Naive thymus-derived CD8-positive, alpha-beta T cell (primary cell): ENCODE measurements at regions of chr1 and their contacts with region 1.

Region 1: GRCh38 chr1:234610348-234611152 is 572 bp upstream of the IRF2BP2 start:
- DNase-seq: peak; percentile 81 to 96 (median 91)
- ATAC-seq: peak; percentile 37 to 51
- H3K4me3 Mint-ChIP-seq: peak overlapping the region; percentile 86 to 97 (median 94)
- H3K27ac Mint-ChIP-seq: peak overlapping the region; percentile 95 to 100 (median 100)
- H3K4me1 Mint-ChIP-seq: peaks cover 41 to 63% (median 57%) of the 10 kb centered on the region in 4 donors
- H3K27me3 Mint-ChIP-seq: peaks cover 0 to 1% (median 0%) of the 10 kb centered on the region in 5 donors

Region 2: DNA sequence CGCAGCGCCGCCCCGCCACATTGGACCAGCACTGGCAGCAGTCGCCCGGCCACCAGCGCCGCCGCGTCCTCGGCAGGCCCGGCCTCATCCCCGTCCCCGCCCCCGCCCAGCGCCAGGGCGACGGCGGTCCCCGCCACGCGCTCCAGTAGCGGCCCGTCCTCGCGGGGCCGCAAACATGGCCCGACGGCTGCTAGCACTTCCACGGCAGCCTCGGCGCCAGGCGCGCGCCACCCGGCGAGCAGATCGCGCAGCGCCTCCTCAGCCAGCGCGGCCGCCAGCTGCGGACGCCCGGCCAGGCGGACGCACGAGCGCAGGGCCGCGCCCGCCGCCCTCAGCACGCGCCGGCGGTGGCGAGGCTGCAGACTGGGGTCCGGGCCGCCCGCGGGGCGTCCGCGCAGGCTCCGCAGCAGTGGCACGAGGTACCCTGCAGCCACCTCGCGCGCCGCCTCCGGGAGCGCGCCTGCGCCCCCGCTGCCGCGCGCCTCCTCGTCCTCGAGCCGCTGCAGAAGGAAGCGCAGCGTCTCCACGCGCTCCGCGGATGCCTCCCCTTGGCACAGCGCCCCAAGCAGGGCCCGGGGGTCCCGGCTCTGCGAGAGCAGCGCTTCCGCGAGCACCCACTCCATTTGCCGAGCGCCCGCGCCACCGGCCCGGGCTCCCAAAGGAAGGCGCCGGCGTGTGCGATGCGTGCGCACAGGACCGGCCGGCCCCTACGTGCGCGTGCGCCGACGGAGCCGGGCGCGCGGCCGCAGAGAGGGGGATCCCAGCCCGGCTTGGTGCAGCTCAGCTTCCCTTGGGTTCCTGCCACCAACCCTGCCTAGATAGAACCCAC is 131.9 kb before region 1 on chr1 and contains the start of gene TARBP1:
- POLR2A ChIA-PET with region 1: interaction called, 20 read pairs
- DNase-seq: peak; percentile 66 to 87 (median 76)
- ATAC-seq: peak; percentile 67 to 68
- H3K4me3 Mint-ChIP-seq: peak within 1 kb of the TSS; percentile 81 to 93 (median 90)
- H3K27ac Mint-ChIP-seq: peak within 1 kb of the TSS; percentile 61 to 96 (median 92)
- H3K4me1 Mint-ChIP-seq: peaks cover 14 to 42% (median 42%) of the 10 kb centered on the region in 4 donors
- H3K27me3 Mint-ChIP-seq: peaks cover 0 to 19% (median 6%) of the 10 kb centered on the region in 5 donors
- polyA plus RNA-seq, gene TARBP1: 12.8 to 15.6 (median 13.2) TPM

Region 3: GRCh38 chr1:234692966-234693580 is 82.5 kb after region 1 on chr1:
- POLR2A ChIA-PET with region 1: interaction called, 12 read pairs
- DNase-seq: no peak
- ATAC-seq: no peak
- H3K4me3 Mint-ChIP-seq: no peak overlapping the region
- H3K27ac Mint-ChIP-seq: no peak overlapping the region
- H3K4me1 Mint-ChIP-seq: peaks cover 0 to 5% (median 0%) of the 10 kb centered on the region in 4 donors
- H3K27me3 Mint-ChIP-seq: no peaks in the 10 kb centered on the region

Region 4: DNA sequence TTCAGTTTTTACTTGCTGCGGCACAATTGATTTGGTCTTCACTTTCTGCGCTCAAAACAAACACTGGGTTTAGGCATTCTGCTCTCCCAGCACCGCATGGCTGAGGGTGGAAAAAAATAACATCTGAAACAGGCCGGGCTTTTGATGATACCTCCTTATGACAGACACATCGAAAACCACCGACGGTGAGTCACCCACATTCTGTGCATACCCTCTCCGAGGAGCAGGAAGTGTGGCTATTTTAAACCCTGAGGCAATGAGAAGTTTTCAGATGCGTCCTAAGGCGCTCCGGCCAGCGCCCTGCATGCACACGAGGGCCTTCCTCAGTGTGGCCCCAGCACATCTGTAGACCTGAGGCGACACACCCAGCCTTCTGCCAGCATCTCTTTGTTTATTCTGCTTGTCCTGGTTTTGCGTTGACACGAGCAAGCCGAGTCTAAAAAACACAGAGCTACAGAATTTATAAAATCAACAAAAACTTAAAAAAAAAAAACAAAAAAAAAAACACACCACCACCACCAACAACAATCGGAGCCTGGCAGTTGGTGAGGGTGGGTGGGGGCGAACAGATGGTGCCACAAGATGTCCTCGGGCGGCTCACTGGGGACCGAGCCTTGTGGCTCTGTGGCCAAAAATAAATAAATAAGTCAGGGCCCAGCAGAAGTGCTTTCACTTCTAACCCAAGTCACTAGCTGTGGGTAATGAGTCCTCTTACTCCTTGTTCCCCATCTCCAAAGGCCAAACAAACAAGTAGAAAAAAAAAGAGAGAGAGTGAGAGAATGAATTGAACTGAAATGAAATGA is 162.0 kb after region 1 on chr1:
- POLR2A ChIA-PET with region 1: interaction called, 92 read pairs
- DNase-seq: peak; percentile 31 to 93 (median 77)
- ATAC-seq: peak; percentile 79 to 87
- H3K4me3 Mint-ChIP-seq: peak overlapping the region; percentile 62 to 83 (median 74)
- H3K27ac Mint-ChIP-seq: peak overlapping the region; percentile 87 to 98 (median 95)
- H3K4me1 Mint-ChIP-seq: peaks cover 38 to 57% (median 56%) of the 10 kb centered on the region in 4 donors
- H3K27me3 Mint-ChIP-seq: no peaks in the 10 kb centered on the region

Region 5: GRCh38 chr1:235011599-235012435 is 401.3 kb after region 1 on chr1:
- POLR2A ChIA-PET with region 1: interaction called, 10 read pairs
- DNase-seq: peak; percentile 67 to 96 (median 92)
- ATAC-seq: peak; percentile 94
- H3K4me3 Mint-ChIP-seq: peak overlapping the region; percentile 61 to 87 (median 76)
- H3K27ac Mint-ChIP-seq: peak overlapping the region; percentile 92 to 99 (median 95)
- H3K4me1 Mint-ChIP-seq: peaks cover 25 to 79% (median 50%) of the 10 kb centered on the region in 4 donors
- H3K27me3 Mint-ChIP-seq: no peaks in the 10 kb centered on the region

Region 6: DNA sequence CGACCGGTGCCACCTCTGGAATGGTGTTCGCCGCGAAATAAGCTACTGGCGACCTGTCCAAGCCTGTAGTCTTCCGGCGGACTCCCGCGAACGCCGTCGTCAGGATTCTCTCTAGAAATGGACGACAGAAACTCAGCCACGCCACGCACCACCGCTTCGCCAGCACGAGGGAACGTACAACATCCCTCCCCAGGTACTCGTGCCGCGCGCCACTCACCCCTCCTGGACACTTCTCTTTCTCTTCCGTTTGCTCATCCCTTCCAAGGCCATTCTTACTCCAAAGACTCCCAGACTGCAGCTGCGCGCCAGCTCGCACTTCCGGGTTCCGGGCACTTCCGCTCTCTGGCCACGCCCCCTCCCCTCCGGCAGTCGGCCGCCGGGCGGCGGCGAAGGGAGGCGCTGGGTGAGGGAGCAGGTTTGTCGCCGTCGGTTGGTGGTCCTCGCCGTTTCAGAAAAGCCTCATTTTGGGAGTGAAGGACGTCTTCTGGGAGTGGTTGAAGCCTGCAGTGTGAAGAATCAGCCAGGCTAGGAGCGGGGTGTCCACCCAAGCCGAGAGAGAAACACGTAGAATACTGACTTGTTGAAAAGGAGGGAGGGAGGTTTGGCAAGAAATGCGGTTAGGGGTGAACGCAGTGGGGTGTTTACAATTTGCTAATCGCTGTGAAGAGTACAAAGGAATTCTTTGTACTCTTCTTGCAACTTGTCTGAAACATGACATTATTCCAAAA is 550.6 kb after region 1 on chr1 and contains the start of gene RBM34:
- POLR2A ChIA-PET with region 1: interaction called, 10 read pairs
- DNase-seq: peak; percentile 87 to 95 (median 92)
- ATAC-seq: peak; percentile 88 to 89
- H3K4me3 Mint-ChIP-seq: peak within 1 kb of the TSS in 9 of 10 donors; percentile 86 to 100 (median 98)
- H3K27ac Mint-ChIP-seq: peak within 1 kb of the TSS; percentile 95 to 100 (median 99)
- H3K4me1 Mint-ChIP-seq: peaks cover 6 to 25% (median 18%) of the 10 kb centered on the region in 4 donors
- H3K27me3 Mint-ChIP-seq: no peaks in the 10 kb centered on the region
- polyA plus RNA-seq, gene RBM34: 66.1 to 92.1 (median 70.4) TPM